CD14-positive monocyte (primary cell): ENCODE measurements at regions of chr7 and their contacts with region 1.

Region 1: GRCh38 chr7:35906191-35906908 is 105.5 kb downstream of the SEPTIN7 start:
- DNase-seq: peak; percentile 54 to 72 (median 70)
- H3K4me3 ChIP-seq: no peak overlapping the region
- H3K4me3 Mint-ChIP-seq: no peak overlapping the region
- H3K27ac ChIP-seq: no peak overlapping the region
- H3K27ac Mint-ChIP-seq: peak overlapping the region in 1 of 7 donors; percentile 38
- H3K4me1 ChIP-seq: no peaks in the 10 kb centered on the region
- H3K4me1 Mint-ChIP-seq: no peaks in the 10 kb centered on the region
- H3K27me3 ChIP-seq: no peaks in the 10 kb centered on the region
- H3K27me3 Mint-ChIP-seq: peaks cover 0 to 2% (median 0%) of the 10 kb centered on the region in 3 donors
- CTCF ChIP-seq: peak; percentile 86

Region 2: DNA sequence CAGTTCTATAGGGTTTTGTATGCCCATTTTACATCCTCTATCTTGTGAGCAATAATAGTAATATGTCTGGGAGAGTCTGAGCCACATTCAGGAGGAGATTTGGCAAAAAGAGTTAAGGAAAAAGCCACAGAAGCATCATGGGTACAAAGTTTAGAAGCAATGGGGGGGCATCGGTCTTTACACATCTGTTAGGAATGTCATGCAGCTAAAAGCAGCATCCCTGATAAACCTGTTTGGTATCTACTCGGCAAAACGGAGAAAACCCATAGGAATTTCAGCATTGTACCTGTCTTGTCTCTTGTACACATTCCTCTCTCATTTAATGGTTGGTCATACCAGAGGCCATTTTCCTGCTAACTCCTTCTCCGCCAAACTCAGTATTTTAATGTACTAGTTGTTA is 198.9 kb before region 1 on chr7:
- intact Hi-C with region 1: loop called (anchors 2 kb)
- DNase-seq: no peak
- H3K4me3 ChIP-seq: no peak overlapping the region
- H3K4me3 Mint-ChIP-seq: no peak overlapping the region
- H3K27ac ChIP-seq: no peak overlapping the region
- H3K27ac Mint-ChIP-seq: no peak overlapping the region
- H3K4me1 ChIP-seq: peaks cover 4 to 9% of the 10 kb centered on the region in 2 donors
- H3K4me1 Mint-ChIP-seq: peaks cover 4% of the 10 kb centered on the region
- H3K27me3 ChIP-seq: no peaks in the 10 kb centered on the region
- H3K27me3 Mint-ChIP-seq: peaks cover 5 to 7% (median 7%) of the 10 kb centered on the region in 3 donors
- CTCF ChIP-seq: no peak

Region 3: DNA sequence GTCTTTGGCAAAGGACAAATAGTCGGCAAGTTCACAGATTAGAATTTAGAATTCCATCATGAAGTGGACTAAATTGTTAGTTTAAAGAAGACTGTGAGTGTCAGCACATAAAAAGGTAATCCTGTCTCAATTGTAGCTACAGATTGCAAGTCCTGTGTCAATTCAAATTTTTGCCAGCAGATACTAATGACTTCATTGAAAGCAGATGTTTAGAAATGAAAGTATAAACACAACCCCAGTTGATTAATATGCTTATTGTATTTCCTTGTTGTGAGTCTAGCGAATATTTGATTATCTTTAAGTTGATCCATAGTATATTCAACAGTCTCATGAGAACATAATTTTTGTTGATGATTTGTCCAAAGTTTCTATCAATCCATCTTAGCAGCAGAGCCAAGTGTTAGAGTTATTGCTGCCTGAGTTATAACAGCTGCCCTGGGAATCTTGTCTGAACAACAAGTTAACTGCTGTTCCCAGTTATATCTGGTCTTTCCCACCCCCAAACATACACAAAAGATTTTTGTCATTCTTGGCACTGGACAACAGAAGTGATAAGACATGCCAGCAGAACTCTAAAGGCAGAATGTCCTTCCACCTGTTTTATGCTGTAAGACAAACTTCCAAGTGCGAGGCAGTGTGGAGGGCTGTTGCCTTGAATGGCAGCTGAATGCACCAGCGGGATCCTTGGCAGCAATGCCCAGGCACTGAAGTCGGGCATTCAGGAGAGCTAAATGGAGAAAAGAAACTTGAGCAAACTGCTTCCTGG is 190.1 kb before region 1 on chr7:
- intact Hi-C with region 1: loop called in 1 of 2 experiments (anchors 2 kb)
- DNase-seq: no peak
- H3K4me3 ChIP-seq: no peak overlapping the region
- H3K4me3 Mint-ChIP-seq: no peak overlapping the region
- H3K27ac ChIP-seq: no peak overlapping the region
- H3K27ac Mint-ChIP-seq: no peak overlapping the region
- H3K4me1 ChIP-seq: no peaks in the 10 kb centered on the region
- H3K4me1 Mint-ChIP-seq: no peaks in the 10 kb centered on the region
- H3K27me3 ChIP-seq: no peaks in the 10 kb centered on the region
- H3K27me3 Mint-ChIP-seq: peaks cover 0 to 6% (median 1%) of the 10 kb centered on the region in 3 donors
- CTCF ChIP-seq: no peak